ENCODE measurements at regions of chr2 and their contacts with region 1.

Region 1: DNA sequence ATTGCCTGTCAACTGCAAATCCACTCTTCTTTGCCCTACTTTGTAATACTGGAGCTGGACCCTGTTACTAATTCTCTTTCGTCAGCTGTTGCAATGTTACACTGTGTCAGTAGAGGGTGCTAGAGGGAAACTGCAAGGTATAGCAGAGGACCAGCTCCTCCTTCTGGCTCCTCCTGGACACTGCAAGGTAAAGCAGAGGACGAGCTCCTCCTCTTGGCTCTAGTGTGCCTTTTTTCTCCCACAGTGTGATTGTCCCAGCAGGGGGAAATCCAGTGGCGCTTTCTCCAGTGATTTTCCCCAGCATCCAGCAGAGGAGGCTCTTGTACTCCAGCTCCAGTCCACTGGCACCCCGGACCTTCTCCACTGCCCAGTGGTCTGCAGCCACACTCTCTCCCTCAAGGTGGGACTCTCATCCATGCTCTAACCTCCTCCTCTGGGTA is 95.6 kb downstream of the CAPN13 start:
- DNase-seq: peak; percentile 94
- ATAC-seq: peak; percentile 80
- H3K4me3 Mint-ChIP-seq: no peak overlapping the region
- H3K27ac Mint-ChIP-seq: no peak overlapping the region
- H3K4me1 Mint-ChIP-seq: peaks cover 8% of the 10 kb centered on the region
- H3K27me3 Mint-ChIP-seq: no peaks in the 10 kb centered on the region

Region 2: GRCh38 chr2:30139131-30139870 is 572.4 kb before region 1 on chr2:
- CTCF ChIA-PET with region 1: interaction called, 14 read pairs
- POLR2A ChIA-PET with region 1: no interaction called
- DNase-seq: peak; percentile 33
- ATAC-seq: peak; percentile 48
- H3K4me3 Mint-ChIP-seq: no peak overlapping the region
- H3K27ac Mint-ChIP-seq: peak overlapping the region; percentile 6
- H3K4me1 Mint-ChIP-seq: peaks cover 12% of the 10 kb centered on the region
- H3K27me3 Mint-ChIP-seq: peaks cover 5% of the 10 kb centered on the region

Region 3: DNA sequence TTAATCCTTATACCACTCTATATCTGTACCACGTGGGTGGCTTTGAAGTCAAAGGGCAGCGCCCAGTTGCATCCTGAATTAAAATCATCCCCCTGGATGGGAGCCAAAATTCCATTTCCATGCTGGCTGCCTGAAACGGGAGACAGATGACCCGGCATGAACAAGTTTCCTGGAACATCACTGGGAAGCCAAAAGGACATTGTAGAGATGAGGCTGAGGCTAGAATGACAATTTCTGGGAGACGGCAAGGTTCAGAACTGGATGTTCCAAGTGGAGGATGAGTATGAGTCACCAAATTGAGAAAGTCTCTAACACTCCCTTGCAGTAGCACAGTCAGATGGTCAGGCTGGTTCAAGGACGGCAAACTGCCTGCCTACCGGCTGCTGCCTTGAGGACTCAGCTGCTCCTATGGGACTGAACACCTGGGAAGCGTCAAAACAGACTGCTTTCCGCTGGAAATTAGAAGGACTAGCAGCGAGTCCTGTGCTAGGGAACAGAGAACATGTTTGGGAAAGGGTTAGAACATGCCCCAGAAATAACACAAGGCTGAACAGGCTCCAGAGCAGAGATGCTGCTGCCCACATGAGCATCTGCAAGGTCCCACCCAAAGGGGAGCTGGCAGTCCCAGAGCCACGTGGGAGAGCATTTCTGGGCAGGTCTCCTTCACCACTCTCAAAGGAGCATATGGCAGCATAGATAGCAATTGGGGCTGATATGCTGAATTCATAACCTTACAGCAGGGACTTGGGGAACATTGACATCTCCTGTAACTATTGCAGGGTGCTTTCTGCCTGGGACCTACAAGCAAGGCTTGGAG is 532.8 kb before region 1 on chr2:
- CTCF ChIA-PET with region 1: interaction called, 17 read pairs
- POLR2A ChIA-PET with region 1: no interaction called
- DNase-seq: no peak
- ATAC-seq: no peak
- H3K4me3 Mint-ChIP-seq: no peak overlapping the region
- H3K27ac Mint-ChIP-seq: no peak overlapping the region
- H3K4me1 Mint-ChIP-seq: peaks cover 2% of the 10 kb centered on the region
- H3K27me3 Mint-ChIP-seq: no peaks in the 10 kb centered on the region

Region 4: GRCh38 chr2:30225131-30225762 is 486.4 kb before region 1 on chr2:
- CTCF ChIA-PET with region 1: interaction called, 26 read pairs
- POLR2A ChIA-PET with region 1: no interaction called
- DNase-seq: peak; percentile 70
- ATAC-seq: peak; percentile 88
- H3K4me3 Mint-ChIP-seq: peak overlapping the region; percentile 97
- H3K27ac Mint-ChIP-seq: peak overlapping the region; percentile 99
- H3K4me1 Mint-ChIP-seq: peaks cover 68% of the 10 kb centered on the region
- H3K27me3 Mint-ChIP-seq: peaks cover 2% of the 10 kb centered on the region

Region 5: DNA sequence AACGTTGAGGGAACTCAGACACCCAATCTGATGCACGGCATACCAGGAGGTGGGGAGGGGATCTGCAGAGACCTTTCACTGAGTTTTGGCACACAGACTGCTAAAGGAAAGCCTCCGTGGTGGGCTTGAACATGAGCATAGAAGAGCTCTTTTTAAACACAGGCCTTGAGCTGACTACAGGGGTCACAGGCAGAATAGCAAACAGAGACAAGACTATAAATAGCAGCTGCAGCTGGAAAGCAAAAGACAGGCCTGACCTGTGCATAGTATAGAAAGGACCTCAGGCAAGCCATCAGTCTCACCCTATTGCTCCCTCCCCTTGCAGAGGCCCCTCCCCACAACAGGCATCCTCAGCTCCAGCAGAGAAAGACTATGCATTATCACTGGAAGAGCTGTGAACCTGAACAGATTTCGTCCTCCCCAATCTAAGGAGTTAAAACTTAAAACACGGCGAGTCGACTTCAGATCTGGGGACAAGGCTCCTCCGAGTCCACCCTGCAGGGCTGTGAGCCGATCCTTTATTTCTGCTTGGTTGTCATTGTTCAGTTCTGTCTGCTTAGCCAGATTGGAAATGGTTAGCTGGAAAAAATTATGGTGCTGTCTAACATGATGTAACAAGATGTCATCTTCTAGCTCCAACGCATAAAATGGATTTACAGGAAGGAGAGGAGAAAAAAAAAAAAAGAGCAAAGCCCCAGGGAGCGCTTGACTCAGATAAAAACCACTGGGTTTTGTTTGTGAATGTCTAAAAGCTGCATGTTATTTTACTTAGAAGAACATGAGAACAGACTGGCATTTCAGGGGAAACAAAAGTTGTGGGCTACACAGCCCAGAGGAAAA is 289.8 kb before region 1 on chr2:
- CTCF ChIA-PET with region 1: interaction called, 11 read pairs
- POLR2A ChIA-PET with region 1: no interaction called
- DNase-seq: peak; percentile 35
- ATAC-seq: peak; percentile 56
- H3K4me3 Mint-ChIP-seq: peak overlapping the region; percentile 36
- H3K27ac Mint-ChIP-seq: peak overlapping the region; percentile 80
- H3K4me1 Mint-ChIP-seq: peaks cover 32% of the 10 kb centered on the region
- H3K27me3 Mint-ChIP-seq: no peaks in the 10 kb centered on the region

Region 6: DNA sequence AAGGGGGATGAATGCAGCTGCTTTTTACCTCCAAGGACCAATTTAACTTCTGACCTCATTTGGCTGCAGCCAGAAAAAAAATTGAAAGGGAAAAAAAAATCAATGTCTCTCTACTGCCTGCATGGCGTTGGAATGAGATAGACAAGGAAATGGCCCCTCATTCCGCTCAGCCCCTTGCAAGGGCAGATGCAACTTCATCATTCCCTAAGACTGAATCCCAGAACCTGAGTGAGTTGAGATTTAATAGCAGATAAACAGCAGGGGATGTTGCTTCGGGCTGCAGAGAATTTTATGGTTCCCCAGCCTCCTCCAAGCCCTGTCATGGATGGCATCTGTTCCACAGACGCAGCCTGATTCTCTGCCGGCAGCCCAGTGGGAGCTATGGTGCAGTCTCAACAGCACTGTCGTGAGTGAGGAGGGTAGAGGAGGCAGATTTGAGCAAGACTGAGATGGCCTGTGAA is 46.6 kb after region 1 on chr2:
- CTCF ChIA-PET with region 1: no interaction called
- POLR2A ChIA-PET with region 1: no interaction called
- DNase-seq: no peak
- ATAC-seq: no peak
- H3K4me3 Mint-ChIP-seq: no peak overlapping the region
- H3K27ac Mint-ChIP-seq: no peak overlapping the region
- H3K4me1 Mint-ChIP-seq: no peaks in the 10 kb centered on the region
- H3K27me3 Mint-ChIP-seq: peaks cover 4% of the 10 kb centered on the region

Region 7: GRCh38 chr2:30820381-30821055 is 108.9 kb after region 1 on chr2:
- CTCF ChIA-PET with region 1: no interaction called
- POLR2A ChIA-PET with region 1: no interaction called
- DNase-seq: no peak
- ATAC-seq: no peak
- H3K4me3 Mint-ChIP-seq: no peak overlapping the region
- H3K27ac Mint-ChIP-seq: no peak overlapping the region
- H3K4me1 Mint-ChIP-seq: no peaks in the 10 kb centered on the region
- H3K27me3 Mint-ChIP-seq: no peaks in the 10 kb centered on the region

Region 8: DNA sequence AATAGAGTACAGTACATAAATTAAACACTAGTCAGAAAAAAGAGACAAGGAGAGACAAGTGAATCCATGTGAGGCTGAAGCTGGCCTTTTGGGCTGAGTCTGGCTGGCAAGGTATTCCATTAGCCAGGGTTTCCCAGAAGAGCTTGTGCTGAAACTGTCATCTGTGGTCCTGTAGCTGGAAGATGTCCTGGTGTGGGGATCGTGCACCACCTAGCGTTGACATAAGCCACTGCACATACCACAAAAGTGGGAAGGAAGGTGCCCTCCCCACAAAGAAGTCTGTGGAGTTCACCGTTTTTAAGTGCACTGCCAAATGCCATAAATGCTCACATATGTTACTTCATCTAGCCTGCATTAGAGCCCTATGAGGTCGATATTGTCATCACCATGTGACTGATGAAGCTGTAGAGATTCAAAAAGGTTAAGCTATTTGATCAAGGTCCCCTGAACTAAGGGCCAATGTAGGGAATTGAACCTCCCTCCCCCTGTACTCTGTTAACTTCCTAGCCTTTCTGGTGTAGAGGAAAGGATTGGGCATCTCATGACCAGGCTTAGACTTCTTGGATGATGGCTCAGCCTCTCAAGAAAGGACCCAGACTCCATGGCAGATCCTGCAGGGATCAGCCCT is 458.5 kb after region 1 on chr2:
- CTCF ChIA-PET with region 1: interaction called, 83 read pairs
- POLR2A ChIA-PET with region 1: no interaction called
- DNase-seq: peak; percentile 67
- ATAC-seq: peak; percentile 79
- H3K4me3 Mint-ChIP-seq: no peak overlapping the region
- H3K27ac Mint-ChIP-seq: no peak overlapping the region
- H3K4me1 Mint-ChIP-seq: peaks cover 5% of the 10 kb centered on the region
- H3K27me3 Mint-ChIP-seq: no peaks in the 10 kb centered on the region

Measured in activated CD8-positive, alpha-beta T cell treated with anti-CD3 and anti-CD28 coated beads, Interleukin-2, amount 10 ng/mL, durations not matched to agents 7 days and 5 days (primary cell).